ENCODE measurements at regions of chr6 and their contacts with region 1.

Region 1: GRCh38 chr6:138765896-138766655 is 7.5 kb upstream of the CCDC28A start:
- DNase-seq: no peak
- H3K4me3 ChIP-seq: no peak overlapping the region
- H3K27ac ChIP-seq: no peak overlapping the region
- H3K4me1 ChIP-seq: no peaks in the 10 kb centered on the region
- H3K27me3 ChIP-seq: no peaks in the 10 kb centered on the region
- CTCF ChIP-seq: peak in 3 of 4 experiments; percentile 45 to 54 (median 51)
- EP300 ChIP-seq: no peak
- POLR2A ChIP-seq: no peak

Region 2: GRCh38 chr6:137989664-137990063 is 776.4 kb before region 1 on chr6:
- intact Hi-C with region 1: loop called (anchors 10 kb)
- DNase-seq: no peak
- H3K4me3 ChIP-seq: no peak overlapping the region
- H3K27ac ChIP-seq: no peak overlapping the region
- H3K4me1 ChIP-seq: no peaks in the 10 kb centered on the region
- H3K27me3 ChIP-seq: no peaks in the 10 kb centered on the region
- CTCF ChIP-seq: no peak
- EP300 ChIP-seq: no peak
- POLR2A ChIP-seq: no peak

Region 3: DNA sequence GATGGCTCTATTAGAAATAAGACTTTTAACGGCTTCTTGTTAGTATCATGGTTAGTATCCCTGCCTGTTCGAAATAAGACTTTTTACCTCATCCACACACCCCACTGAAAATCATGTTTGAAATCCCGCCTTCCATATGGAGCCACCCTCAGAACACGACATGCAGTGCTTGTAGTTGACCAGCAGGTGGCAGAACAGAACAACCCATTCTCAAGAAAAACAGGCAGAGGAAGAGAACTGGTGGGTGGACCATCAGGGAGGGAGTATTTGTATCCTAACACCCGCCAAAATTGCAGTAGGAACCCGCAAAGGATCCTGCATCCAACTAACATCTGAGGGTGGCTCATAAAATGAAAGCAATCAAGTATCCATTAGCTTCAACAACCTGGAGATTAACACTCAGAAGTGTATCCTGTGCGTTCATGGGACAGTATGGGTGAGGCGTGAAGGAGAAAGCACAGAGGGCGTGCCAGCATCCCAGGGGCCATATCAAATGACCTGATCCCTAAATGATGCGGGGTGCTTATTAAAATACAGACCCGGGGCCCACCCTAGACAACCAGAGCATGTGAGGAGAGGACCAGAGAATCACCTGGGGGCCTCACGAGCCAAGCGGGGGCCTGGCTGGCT is 177.2 kb before region 1 on chr6:
- intact Hi-C with region 1: loop called (anchors 2 kb)
- DNase-seq: peak; percentile 70
- H3K4me3 ChIP-seq: no peak overlapping the region
- H3K27ac ChIP-seq: no peak overlapping the region
- H3K4me1 ChIP-seq: peaks cover 0 to 6% (median 0%) of the 10 kb centered on the region in 4 donors
- H3K27me3 ChIP-seq: no peaks in the 10 kb centered on the region
- CTCF ChIP-seq: peak; percentile 76 to 92 (median 86)
- EP300 ChIP-seq: no peak
- POLR2A ChIP-seq: no peak

Region 4: GRCh38 chr6:138728662-138729061 is 37.4 kb before region 1 on chr6:
- intact Hi-C with region 1: no loop called
- DNase-seq: no peak
- H3K4me3 ChIP-seq: no peak overlapping the region
- H3K27ac ChIP-seq: no peak overlapping the region
- H3K4me1 ChIP-seq: peaks cover 0 to under 1% (median 0%) of the 10 kb centered on the region in 4 donors
- H3K27me3 ChIP-seq: no peaks in the 10 kb centered on the region
- CTCF ChIP-seq: no peak
- EP300 ChIP-seq: no peak
- POLR2A ChIP-seq: no peak

Measured in sigmoid colon (tissue), 7 donors.